Calu3 (cell line): ENCODE measurements at regions of chr6 and their contacts with region 1.

Region 1: DNA sequence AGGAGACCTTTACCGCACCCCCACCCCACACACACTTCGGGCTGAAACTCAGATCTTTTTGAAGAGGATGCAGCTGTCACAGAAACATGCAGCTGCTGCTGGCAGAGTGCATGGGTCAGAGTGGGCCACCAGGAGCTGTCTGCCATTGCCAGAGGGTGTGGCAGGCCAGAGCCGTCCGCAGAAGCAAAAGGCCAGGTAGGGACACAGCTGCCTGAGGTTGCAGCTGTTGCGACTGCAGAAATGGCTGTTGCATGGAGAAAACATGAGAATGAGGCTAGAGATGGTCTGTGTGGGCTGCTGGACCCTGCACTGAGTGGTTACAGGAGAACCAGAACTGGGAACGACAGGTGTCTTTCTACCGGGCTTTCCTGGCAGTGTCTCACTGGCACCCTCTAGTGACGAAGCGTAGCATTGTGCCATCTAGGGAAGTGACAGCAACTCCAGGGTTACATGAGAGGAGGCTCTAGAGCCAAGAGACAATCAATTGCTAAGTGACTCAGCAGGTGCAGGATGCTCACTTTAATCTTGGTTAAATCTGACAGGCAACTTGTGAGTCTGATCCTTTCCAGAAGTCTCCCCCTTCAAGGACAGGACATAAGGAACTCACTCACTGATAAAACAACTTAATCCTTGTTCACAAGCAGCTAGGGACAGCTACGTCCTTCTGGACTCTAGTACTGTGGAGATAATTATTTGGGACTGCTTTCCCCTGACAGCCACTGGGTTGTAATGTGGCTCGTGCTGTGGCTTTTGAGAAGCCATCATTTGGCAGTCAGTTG is 29.1 kb upstream of the SERPINB9 start:
- DNase-seq: peak; percentile 79
- H3K4me3 Mint-ChIP-seq: no peak overlapping the region
- H3K27ac Mint-ChIP-seq: no peak overlapping the region
- H3K4me1 Mint-ChIP-seq: peaks cover 9% of the 10 kb centered on the region
- H3K27me3 Mint-ChIP-seq: no peaks in the 10 kb centered on the region
- CTCF ChIP-seq: peak; percentile 76

Region 2: DNA sequence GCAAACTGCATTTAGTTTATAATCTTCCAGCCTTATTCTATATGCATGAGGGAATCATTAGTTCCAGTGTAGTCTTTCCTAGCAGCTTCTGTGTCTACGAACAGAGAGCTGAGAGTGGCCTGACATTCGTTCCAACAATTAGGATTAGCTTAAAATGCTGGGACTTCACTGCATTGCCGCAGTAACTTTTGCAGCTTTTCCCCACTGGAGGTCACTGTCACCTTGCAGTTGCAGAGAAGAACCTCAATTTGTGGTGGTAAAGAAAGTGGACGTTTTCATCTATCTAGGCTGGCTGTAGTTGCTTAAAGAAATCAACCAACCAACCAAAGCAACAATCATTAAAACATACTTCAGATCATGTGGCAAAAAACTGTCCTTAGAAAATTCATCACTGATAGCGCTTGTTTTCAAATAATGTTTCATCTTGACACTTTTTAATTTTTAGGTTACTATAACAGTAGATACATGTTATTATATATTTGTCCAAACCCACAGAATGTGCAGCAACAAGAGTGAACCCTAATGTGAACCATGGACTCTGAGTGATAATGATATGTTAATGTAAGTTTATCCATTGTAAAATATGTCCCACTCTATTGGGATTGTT is 193.7 kb before region 1 on chr6:
- CTCF ChIA-PET with region 1: no interaction called
- intact Hi-C with region 1: loop called (anchors 2 kb)
- DNase-seq: peak; percentile 64
- H3K4me3 Mint-ChIP-seq: no peak overlapping the region
- H3K27ac Mint-ChIP-seq: no peak overlapping the region
- H3K4me1 Mint-ChIP-seq: no peaks in the 10 kb centered on the region
- H3K27me3 Mint-ChIP-seq: no peaks in the 10 kb centered on the region
- CTCF ChIP-seq: peak; percentile 50

Region 3: GRCh38 chr6:2846873-2847224 is 85.3 kb before region 1 on chr6:
- CTCF ChIA-PET with region 1: interaction called, 27 read pairs
- intact Hi-C with region 1: loop called (anchors 1 kb)
- DNase-seq: no peak
- H3K4me3 Mint-ChIP-seq: peak overlapping the region; percentile 41
- H3K27ac Mint-ChIP-seq: peak overlapping the region; percentile 96
- H3K4me1 Mint-ChIP-seq: peaks cover 22% of the 10 kb centered on the region
- H3K27me3 Mint-ChIP-seq: no peaks in the 10 kb centered on the region
- CTCF ChIP-seq: no peak

Region 4: DNA sequence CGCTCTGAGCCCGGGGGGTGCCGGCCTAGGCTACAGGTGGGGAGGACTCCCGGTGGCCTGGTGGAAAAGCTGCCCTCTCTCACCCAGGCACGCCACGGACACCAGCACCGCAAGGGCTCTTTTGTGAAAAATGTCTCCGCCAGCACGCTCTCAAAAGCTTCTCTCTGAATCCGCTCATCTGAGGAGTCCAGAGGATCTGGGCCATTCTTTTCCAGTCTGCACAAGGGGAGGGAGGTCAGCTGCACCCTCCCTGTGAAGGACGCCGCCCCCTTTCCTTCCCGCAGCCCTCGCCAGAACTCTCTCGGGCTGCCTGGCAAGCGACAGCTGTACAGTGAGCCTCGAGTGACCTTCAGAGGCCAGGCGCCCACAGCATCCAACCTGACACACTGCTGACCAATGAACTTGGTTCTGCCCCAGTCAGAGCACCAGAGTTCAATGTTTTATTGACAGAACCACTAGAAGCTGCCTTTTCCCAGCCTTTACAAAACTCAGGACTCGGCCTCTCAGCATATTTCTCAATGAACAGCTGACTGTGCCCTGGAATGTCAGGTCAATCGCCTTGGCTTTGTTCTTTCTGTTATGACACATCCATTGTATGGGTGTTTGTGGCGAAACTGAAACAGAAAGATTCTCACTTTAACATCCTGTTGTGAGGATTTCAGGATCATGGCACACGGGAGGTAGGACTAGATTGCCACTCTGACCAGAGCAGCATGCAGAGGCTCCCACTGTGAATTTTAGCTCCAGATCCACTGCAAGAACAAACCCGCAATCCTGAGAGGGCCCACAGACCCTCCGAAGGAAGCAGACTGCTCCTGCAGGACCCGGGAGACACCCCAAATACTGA is 55.7 kb before region 1 on chr6:
- CTCF ChIA-PET with region 1: no interaction called
- intact Hi-C with region 1: no loop called
- DNase-seq: peak; percentile 58
- H3K4me3 Mint-ChIP-seq: peak overlapping the region; percentile 69
- H3K27ac Mint-ChIP-seq: peak overlapping the region; percentile 87
- H3K4me1 Mint-ChIP-seq: peaks cover 39% of the 10 kb centered on the region
- H3K27me3 Mint-ChIP-seq: no peaks in the 10 kb centered on the region
- CTCF ChIP-seq: no peak

Region 5: DNA sequence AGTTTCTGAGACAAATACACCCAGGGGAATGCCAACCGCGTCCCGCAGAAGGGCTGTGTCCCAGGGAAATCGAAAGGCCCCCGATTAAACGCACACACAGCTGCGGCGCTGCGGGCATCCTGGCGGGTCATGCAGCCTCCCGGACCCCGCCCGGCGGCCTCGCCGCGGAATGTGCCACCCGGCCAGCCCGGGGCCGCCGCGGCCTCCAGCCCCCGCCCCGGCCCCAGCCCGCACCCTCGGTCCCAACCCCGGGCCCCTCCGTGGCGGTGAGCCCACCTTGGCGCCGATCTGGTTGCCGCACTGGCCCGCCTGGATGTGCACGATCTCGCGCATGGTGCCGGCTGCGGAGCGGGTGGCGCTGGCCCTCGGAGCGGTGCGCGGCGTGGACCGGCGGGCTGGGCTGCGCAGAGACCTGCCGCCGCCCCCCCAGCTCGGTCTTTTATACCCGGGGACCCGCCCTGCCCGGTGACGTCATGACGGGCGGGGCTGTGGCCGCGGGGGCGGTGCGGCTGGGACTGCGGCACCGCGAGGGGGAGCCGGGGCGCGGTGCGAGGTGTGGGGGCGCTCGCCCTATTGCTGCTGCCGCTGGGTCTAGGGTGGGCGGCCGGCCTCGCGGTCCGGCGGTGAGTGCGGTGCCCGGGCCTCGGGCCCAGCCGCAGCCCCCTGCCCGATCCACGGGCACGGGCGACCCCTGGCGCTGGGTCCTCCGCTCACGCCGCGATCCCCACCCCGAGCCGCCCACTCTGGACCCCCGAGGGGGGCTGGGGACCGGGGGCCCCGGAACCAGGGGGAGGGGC is 225.2 kb after region 1 on chr6 and contains the start of gene TUBB2A:
- CTCF ChIA-PET with region 1: no interaction called
- intact Hi-C with region 1: no loop called
- DNase-seq: peak; percentile 84
- H3K4me3 Mint-ChIP-seq: peak within 1 kb of the TSS; percentile 68
- H3K27ac Mint-ChIP-seq: peak within 1 kb of the TSS; percentile 81
- H3K4me1 Mint-ChIP-seq: peaks cover 10% of the 10 kb centered on the region
- H3K27me3 Mint-ChIP-seq: no peaks in the 10 kb centered on the region
- CTCF ChIP-seq: peak; percentile 56
- total RNA-seq, gene TUBB2A: 16.0 and 17.6 TPM in 2 replicates